HEK293 (cell line): ENCODE measurements at regions of chr17 and their contacts with region 1.

Region 1: GRCh38 chr17:28335201-28335955 is at the starts of genes IFT20 and TNFAIP1:
- H3K4me3 ChIP-seq: peak within 1 kb of the TSS; percentile 87
- H3K27ac ChIP-seq: peak within 1 kb of the TSS; percentile 62
- H3K4me1 ChIP-seq: peaks cover 14% of the 10 kb centered on the region
- CTCF ChIP-seq: peak; percentile 84

Region 2: DNA sequence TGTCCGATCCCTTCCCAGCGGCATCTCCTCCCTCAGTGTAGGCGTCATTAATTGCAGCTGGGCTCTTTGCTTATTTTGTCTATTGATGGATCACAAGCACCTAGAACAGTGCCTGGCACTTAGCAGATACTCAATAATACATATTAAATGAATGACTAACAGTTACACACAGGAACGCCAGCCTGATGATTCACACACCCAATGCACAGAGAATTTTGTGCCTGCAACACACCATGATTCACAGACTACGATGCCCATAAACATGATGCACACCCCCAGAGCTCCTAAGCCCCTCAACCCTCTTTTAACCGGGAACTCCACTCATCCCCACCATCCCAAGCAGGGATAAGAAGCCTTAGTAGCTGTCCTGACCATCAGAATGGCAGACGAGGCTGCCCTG is 82.9 kb before region 1 on chr17:
- CTCF ChIA-PET with region 1: interaction called, 15 read pairs
- POLR2A ChIA-PET with region 1: interaction called, 15 read pairs
- H3K4me3 ChIP-seq: no peak overlapping the region
- H3K27ac ChIP-seq: no peak overlapping the region
- H3K4me1 ChIP-seq: no peaks in the 10 kb centered on the region
- CTCF ChIP-seq: no peak

Region 3: GRCh38 chr17:28279461-28279860 is 55.9 kb before region 1 on chr17:
- CTCF ChIA-PET with region 1: no interaction called
- POLR2A ChIA-PET with region 1: no interaction called
- H3K4me3 ChIP-seq: no peak overlapping the region
- H3K27ac ChIP-seq: no peak overlapping the region
- H3K4me1 ChIP-seq: peaks cover 10% of the 10 kb centered on the region
- CTCF ChIP-seq: no peak

Region 4: DNA sequence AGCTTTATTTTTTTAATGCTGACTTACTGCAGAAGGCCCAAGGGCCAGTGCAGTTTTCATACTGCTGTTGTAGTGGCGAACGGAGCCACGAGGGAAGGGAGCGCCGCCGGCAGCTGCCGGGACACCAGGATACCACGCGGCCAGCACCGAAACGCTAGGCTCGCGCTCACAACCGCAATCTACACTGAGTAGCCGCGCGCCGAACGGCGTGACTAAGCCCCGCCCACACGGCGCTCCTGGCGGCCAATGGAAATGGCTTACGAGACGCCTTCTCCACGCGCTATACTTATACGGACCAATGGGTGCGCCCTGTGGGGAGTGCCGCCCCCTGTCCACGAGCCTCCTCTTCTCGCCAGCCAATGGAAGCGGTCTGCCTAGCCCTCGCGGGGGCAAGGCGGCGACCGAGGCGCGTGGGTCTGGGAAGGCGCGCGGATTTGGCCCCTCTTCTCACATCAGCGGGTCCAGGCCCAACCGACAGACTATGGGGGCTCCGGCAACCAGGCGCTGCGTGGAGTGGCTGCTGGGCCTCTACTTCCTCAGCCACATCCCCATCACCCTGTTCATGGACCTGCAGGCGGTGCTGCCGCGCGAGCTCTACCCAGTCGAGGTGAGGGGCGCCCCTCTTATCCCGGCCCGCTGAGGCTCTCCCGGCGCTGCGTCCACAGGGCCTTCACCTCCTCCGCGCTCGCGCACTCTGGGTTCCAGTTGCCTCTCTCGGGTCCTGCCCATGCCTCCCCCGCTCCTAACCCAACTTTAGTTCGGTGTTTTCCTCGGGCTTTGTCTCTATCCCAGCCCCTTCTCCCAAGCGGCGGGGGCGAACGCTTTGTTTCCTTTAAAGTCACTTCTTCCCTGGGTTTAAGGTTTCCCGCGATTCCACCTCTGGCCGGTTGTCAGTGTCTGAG is 16.4 kb before region 1 on chr17 and contains the start of gene TMEM97:
- CTCF ChIA-PET with region 1: interaction called, 8 read pairs
- POLR2A ChIA-PET with region 1: interaction called, 40 read pairs
- H3K4me3 ChIP-seq: peak within 1 kb of the TSS; percentile 69
- H3K27ac ChIP-seq: peak within 1 kb of the TSS; percentile 88
- H3K4me1 ChIP-seq: peaks cover 10% of the 10 kb centered on the region
- CTCF ChIP-seq: peak; percentile 88

Region 5: DNA sequence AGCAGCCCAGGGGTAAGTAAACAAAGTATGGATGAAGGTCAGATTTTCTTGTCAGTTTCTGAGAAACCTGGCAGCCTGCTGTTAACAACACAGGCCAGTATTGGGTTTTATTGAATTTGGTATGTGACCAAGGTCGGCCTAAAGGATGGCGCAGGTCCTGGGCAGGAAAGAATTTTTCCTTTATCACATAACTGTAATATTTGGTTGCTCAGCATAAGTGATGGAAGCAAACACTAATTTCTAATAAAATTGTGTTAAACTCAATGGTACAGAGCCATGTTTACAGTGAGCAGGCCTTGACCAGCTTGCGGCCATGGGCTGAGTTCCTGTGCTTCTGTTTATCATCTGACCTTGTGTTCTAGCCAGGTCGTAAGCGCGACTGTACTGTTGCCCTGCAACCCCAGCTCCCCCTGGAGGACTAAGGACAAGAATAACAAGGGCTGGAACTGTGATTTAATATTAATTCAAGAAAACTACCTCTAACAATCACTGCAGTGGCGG is 11.4 kb after region 1 on chr17:
- CTCF ChIA-PET with region 1: interaction called, 7 read pairs
- POLR2A ChIA-PET with region 1: interaction called, 53 read pairs
- H3K4me3 ChIP-seq: no peak overlapping the region
- H3K27ac ChIP-seq: 0 out of 2 replicates have a peak overlapping the region, but pooled peaks have one; percentile 22
- H3K4me1 ChIP-seq: no peaks in the 10 kb centered on the region
- CTCF ChIP-seq: no peak

Region 6: DNA sequence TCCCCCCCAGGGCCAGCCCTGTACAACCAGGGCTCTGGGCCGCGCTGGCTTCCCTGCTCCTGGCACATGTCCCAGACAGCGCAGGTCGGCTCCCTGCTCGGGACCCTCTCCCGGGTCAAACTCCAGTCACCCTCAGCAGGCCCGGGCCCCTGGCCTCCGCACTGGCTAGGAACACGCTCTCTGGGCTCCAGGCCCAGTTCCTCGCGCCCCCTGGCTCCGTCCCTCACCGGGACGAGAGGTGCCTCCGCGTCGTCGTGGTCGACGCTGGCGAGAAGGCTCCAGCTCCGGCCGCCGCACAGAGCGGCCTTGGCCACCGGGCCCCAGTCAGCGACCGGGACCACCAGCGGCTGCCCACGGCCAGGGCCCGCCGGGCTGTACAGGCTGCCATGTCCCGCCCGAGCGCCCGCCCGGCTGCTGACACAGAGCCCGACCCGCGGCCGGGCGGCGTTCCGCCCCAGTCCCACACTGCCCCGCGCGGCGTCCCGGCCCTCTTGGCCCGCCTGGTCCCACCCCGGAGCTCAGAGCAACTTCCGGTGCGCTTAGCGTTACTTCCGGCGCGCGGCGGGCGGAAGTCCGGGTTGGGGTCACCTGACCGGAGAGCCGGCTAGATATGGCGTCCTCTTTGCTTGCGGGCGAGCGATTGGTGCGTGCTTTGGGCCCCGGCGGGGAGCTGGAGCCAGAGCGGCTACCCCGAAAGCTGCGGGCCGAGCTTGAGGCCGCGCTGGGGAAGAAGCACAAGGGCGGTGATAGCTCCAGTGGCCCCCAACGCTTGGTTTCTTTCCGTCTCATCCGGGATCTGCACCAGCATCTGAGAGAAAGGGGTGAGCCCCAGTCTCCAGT is 21.9 kb after region 1 on chr17 and contains the start of gene POLDIP2:
- CTCF ChIA-PET with region 1: interaction called, 13 read pairs
- POLR2A ChIA-PET with region 1: interaction called, 122 read pairs
- H3K4me3 ChIP-seq: peak within 1 kb of the TSS; percentile 90
- H3K27ac ChIP-seq: peak within 1 kb of the TSS; percentile 85
- H3K4me1 ChIP-seq: peaks cover 6% of the 10 kb centered on the region
- CTCF ChIP-seq: no peak

Region 7: GRCh38 chr17:28371245-28372202 is 36.1 kb after region 1 on chr17 and contains the start of gene SARM1:
- CTCF ChIA-PET with region 1: no interaction called
- POLR2A ChIA-PET with region 1: interaction called, 14 read pairs
- H3K4me3 ChIP-seq: peak within 1 kb of the TSS; percentile 50
- H3K27ac ChIP-seq: peak within 1 kb of the TSS; percentile 87
- H3K4me1 ChIP-seq: peaks cover 13% of the 10 kb centered on the region
- CTCF ChIP-seq: 0 out of 2 replicates have a peak, but pooled peaks have one; percentile 23